ENCODE measurements at regions of chr7 and their contacts with region 1.

Region 1: DNA sequence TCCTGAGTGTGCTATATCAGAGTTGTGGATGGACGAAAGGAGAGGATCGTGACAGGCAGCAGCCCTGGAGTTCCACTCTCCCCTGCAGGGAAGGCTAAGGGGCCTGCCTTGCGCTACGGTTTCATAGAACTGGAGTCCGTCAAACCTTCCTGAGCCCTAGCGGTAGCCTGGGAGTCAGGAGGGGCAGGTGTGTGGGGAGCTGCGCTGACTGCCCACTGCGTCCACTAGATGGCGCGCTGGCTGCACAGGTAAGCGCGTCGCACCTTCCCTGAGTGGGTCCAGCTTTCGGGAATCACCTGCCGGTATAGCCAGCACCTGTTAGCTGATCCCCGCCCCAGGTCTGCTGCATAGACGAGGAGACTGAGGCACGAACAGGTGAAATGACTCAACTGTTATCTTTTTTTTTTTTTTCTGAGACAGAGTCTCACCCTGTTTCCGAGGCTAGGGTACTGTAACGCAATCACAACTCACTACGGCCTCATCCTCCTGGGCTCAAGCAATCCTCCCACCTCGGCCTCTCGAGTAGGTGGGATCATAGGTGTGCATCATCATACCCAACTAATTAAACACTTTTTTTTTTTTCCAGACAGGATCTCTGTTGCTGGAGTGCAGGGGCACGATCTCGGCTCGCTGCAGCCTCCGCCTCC is 20.2 kb upstream of the BAIAP2L1 start:
- DNase-seq: peak; percentile 75 to 83
- ATAC-seq: peak; percentile 74

Region 2: GRCh38 chr7:97731736-97732564 is 689.1 kb before region 1 on chr7 and contains the start of gene TAC1:
- intact Hi-C with region 1: no loop called
- DNase-seq: peak in 1 of 2 donors; percentile 12
- ATAC-seq: peak; percentile 45
- total RNA-seq, gene TAC1: 0.24 to 1.7 TPM

Region 3: DNA sequence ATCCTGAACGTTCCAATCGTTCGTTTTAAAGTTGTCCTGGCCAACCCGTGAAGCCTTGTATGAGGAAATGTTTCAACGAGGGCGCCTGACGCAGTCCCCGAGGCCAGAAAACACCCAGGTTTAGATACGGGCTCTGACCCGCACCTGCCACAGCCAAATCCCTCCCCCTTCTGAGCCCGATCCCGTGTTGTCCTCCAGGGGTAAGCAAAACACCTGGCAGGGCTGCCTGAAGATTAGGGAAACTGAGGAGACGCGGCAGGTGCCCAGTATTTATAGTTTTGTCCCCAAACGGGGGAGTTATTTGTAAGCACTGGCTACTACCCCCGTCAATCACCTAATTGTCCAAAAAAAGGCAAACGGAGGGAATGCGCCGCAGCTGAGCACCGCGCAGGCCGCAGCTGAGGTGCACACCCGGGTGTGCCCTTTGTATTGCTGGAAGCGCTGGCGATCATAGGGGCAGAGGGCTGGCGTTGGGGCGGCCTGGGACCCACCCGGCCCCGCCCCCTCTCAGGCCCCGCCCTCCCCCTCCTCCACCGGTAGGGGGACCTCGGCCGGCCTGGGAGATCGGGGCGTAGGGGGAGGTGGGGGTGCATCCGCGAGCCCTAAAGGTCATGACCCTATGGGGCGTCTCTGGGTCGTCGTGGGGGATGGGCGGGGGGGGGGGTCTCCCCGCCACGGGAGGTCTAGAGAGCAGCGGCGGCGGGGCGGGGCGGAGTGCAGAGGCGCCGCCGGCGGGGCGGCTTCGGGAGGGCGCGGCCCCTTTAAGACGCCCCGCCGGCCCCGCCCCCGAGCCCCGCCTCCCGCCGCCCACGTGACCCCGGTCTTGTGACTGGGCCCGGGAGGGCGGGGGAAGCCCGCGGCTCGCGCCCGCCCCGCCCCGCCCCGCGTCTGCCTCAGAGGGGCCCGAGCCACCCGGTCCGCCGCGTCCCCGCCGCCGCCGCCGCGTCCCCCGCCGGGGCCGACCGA is 140.0 kb before region 1 on chr7 and contains the start of gene BRI3:
- intact Hi-C with region 1: no loop called
- DNase-seq: peak; percentile 88 to 92
- ATAC-seq: peak; percentile 60
- total RNA-seq, gene BRI3: 193 to 210 TPM

Region 4: GRCh38 chr7:98548981-98549380 is 127.9 kb after region 1 on chr7:
- intact Hi-C with region 1: no loop called
- DNase-seq: no peak
- ATAC-seq: no peak

Region 5: DNA sequence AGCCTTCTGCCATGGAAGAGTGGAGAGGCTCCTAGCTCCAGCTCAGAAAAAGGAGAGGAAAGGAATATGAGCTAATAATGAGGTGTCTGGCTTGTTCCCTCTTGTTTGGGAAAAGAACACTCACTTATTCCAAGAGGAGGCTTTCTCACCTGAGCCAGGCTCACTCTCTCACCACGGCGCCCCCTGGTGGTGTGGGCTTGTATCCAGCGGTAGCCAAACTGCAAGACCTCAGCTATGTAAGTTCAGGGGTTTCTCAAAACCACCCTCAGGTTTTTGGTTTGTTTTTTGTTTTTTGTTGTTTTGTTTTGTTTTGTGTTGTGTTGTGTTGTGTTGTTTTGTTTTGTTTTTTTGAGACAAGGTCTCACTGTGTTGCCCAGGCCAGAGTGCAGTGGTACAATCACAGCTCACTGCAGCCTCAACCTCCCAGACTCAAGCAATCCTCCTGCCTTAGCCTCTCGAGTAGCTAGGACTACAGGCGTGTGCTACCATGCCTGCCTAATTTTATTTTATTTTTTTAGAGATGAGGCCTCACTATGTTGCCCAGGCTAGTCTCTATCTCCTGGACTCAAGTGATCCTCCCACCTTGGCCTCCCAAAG is 324.7 kb after region 1 on chr7:
- intact Hi-C with region 1: loop called in 1 of 2 experiments (anchors 10 kb)
- DNase-seq: peak; percentile 40 to 87
- ATAC-seq: peak; percentile 59